Mammary epithelial cell (primary cell): ENCODE measurements at regions of chr5 and their contacts with region 1.

Region 1: DNA sequence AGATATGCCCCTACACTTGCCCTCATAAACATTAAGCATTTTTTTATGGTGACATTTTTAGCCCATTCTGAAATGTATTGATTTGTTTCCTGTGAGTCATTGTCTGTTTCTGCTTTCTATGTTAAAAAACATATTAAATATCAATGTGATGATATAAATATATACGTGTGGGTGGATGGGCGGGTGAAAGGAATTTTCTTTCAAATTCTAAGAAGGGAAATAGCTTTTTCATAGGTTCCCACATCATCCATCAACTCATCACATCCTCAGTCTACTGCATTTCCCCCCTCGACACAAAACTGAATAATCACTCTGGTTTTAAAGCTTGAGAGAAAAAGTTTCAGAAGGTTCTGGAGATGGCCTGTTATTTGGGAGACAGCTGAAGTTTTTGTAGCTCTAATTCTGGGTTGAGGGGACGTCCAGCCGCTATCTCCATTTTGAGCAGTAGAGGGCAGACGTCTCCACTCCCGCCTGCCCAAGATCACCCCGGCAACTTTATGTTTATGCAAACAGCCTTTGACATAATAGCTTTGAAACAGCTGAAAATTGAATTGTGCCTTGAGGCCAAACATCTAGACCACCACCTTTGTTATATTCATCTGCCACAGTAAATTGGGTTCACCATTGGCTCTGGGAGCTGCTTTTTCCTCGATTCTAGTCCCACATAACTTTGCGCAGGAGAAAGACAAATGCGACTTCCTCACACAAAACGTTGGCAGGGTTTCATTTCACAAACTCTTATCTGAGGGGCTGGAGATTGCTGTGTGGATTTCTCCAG is 216.2 kb upstream of the CLINT1 start:
- DNase-seq: peak; percentile 35
- H3K4me3 ChIP-seq: no peak overlapping the region
- H3K27ac ChIP-seq: no peak overlapping the region
- H3K4me1 ChIP-seq: no peaks in the 10 kb centered on the region
- H3K27me3 ChIP-seq: no peaks in the 10 kb centered on the region
- CTCF ChIP-seq: peak; percentile 68 to 83

Region 2: GRCh38 chr5:157820593-157821252 is 254.5 kb before region 1 on chr5:
- CTCF ChIA-PET with region 1: interaction called, 29 read pairs
- dilution Hi-C with region 1: no loop called
- in situ Hi-C with region 1: no loop called
- intact Hi-C with region 1: no loop called
- DNase-seq: peak; percentile 14
- H3K4me3 ChIP-seq: no peak overlapping the region
- H3K27ac ChIP-seq: no peak overlapping the region
- H3K4me1 ChIP-seq: no peaks in the 10 kb centered on the region
- H3K27me3 ChIP-seq: no peaks in the 10 kb centered on the region
- CTCF ChIP-seq: peak; percentile 47 to 53

Region 3: GRCh38 chr5:157845894-157846598 is 229.1 kb before region 1 on chr5:
- CTCF ChIA-PET with region 1: no interaction called
- dilution Hi-C with region 1: no loop called
- in situ Hi-C with region 1: no loop called
- intact Hi-C with region 1: no loop called
- DNase-seq: no peak
- H3K4me3 ChIP-seq: no peak overlapping the region
- H3K27ac ChIP-seq: no peak overlapping the region
- H3K4me1 ChIP-seq: no peaks in the 10 kb centered on the region
- H3K27me3 ChIP-seq: no peaks in the 10 kb centered on the region
- CTCF ChIP-seq: no peak

Region 4: GRCh38 chr5:157948738-157949410 is 126.3 kb before region 1 on chr5:
- CTCF ChIA-PET with region 1: no interaction called
- dilution Hi-C with region 1: no loop called
- in situ Hi-C with region 1: no loop called
- intact Hi-C with region 1: no loop called
- DNase-seq: peak; percentile 89
- H3K4me3 ChIP-seq: no peak overlapping the region
- H3K27ac ChIP-seq: no peak overlapping the region
- H3K4me1 ChIP-seq: no peaks in the 10 kb centered on the region
- H3K27me3 ChIP-seq: no peaks in the 10 kb centered on the region
- CTCF ChIP-seq: peak; percentile 82 to 93

Region 5: DNA sequence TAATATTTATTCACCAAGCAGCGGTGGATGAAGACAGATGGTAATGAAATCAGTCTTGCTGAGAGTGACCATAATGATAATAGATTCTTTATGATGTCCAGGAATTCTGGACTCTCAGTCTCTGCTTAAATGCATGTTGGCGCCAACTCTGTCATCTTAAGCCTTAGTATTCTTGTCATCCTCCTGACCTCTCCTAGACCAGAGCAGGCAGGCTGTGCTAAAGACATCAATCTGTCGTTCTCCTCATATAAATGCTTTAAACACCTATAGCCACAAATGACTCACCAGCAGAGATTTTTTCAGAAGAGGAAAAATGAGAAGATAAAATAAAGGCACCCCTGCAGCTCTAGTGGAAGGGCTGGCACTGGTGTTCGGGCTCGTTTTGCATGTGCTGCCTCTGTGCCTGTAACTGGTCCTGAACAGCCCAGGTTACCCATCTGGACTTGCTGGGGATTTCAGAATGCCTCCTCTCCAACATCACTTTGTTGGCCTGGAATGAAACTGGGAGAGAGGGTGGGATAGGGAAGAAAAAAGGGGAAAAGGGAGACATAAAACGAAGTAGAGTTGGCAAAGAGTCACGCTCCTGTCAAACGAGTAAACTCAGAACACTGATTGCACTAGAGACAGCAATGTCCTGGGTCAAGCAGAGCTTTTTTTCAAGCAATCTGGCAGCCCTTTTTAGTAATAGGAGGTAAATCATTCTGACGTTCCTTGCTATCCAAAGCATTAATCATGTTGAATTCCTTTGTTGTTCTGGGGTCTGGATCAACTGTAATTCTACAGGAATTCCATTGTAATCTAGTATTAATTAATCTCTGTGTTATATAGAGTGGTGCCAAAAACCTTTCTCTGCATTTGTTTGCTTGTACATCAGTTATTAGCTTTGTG is 20.7 kb before region 1 on chr5:
- CTCF ChIA-PET with region 1: interaction called, 10 read pairs
- dilution Hi-C with region 1: no loop called
- in situ Hi-C with region 1: no loop called
- intact Hi-C with region 1: no loop called
- DNase-seq: no peak
- H3K4me3 ChIP-seq: no peak overlapping the region
- H3K27ac ChIP-seq: no peak overlapping the region
- H3K4me1 ChIP-seq: peaks cover 4% of the 10 kb centered on the region
- H3K27me3 ChIP-seq: no peaks in the 10 kb centered on the region
- CTCF ChIP-seq: no peak

Region 6: DNA sequence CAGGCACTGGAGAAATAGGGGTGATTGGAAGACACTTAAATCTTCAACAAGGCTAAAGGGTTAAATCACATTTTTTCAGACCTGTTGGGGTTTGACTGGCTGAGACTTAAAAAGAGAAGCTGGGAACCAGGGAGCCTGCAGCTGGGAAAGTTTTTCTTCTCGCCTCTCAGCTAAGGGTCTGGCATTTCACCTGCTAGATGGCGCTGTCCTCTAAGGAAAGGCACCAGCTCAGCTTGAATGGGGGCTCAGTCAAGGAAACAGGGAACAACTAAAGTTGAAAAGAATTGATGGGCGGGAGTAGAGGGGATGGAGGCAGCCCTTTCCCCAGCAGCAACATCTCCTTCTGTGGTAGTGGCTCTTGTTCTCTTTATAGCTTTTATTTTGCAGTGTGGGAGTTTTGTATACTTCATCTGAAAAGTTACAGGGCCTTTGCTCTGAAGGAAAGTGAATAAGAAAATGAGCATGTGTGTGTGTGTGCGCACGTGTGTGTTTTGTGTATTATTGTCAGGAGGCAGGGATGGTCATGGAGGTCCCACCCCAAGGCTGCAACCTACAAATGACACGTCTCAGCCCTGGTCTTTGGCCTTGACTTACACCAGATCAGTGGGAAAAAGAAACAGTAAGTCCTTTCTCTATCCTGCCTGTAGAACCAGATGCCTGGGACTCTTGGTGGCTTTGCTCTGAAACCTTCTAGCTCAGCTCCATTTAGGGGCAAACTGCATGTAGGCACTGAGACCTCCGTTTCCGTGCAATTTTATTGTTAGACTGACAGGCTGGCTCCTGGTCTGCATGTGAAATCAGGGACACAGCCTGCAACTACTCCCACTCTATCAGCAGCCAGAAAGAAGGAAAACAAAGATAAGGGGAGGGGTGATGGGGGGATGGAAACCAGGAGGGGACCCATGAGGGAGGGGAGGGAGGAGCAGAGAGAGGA is 100.0 kb after region 1 on chr5:
- CTCF ChIA-PET with region 1: interaction called, 3 read pairs
- dilution Hi-C with region 1: no loop called
- in situ Hi-C with region 1: no loop called
- intact Hi-C with region 1: loop called (anchors 2 kb)
- DNase-seq: peak; percentile 23
- H3K4me3 ChIP-seq: no peak overlapping the region
- H3K27ac ChIP-seq: no peak overlapping the region
- H3K4me1 ChIP-seq: no peaks in the 10 kb centered on the region
- H3K27me3 ChIP-seq: no peaks in the 10 kb centered on the region
- CTCF ChIP-seq: peak; percentile 79 to 91

Region 7: GRCh38 chr5:158695595-158696330 is 620.6 kb after region 1 on chr5:
- CTCF ChIA-PET with region 1: no interaction called
- dilution Hi-C with region 1: no loop called
- in situ Hi-C with region 1: no loop called
- intact Hi-C with region 1: loop called (anchors 2 kb)
- DNase-seq: peak; percentile 17
- H3K4me3 ChIP-seq: no peak overlapping the region
- H3K27ac ChIP-seq: no peak overlapping the region
- H3K4me1 ChIP-seq: no peaks in the 10 kb centered on the region
- H3K27me3 ChIP-seq: peaks cover 2% of the 10 kb centered on the region
- CTCF ChIP-seq: peak; percentile 90 to 97

Region 8: DNA sequence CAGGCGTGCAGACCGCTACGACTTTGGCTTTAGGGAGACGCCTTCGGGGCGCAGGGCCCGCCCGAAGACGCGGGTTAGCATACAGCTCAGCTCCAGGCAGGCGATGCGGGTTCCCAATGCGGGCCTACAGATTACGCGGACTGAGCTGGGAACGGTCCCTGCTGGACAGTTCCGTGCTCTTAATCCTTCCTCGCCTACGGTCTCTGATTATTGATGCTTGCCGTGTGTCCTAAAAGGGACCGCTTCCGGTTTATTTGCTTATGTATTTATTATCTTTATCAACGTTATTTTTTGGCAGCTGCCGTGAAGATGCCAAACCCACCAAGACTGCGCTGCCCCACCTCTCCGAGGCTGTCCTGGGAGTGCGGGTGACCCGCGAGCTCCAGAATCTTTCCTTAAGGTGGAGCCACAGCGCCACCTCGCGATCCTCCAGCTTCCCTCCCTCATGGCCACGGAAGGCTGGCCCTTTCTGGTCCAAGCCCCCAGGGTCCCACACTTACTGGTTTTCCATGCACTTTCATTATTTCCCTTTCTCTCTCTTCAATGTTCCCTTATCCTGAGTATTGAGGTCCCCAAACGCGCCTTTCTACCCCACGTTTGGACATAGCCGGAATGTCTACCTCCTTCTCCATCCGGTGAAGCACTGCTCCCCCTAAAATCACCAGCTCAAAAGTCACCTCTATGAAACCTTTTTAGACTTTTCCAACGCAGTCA is 1031.5 kb after region 1 on chr5:
- CTCF ChIA-PET with region 1: interaction called, 11 read pairs
- dilution Hi-C with region 1: no loop called
- in situ Hi-C with region 1: no loop called
- intact Hi-C with region 1: loop called (anchors 1 kb)
- DNase-seq: peak; percentile 38
- H3K4me3 ChIP-seq: peak overlapping the region in 2 of 3 experiments; percentile 14 to 28
- H3K27ac ChIP-seq: no peak overlapping the region
- H3K4me1 ChIP-seq: peaks cover 4% of the 10 kb centered on the region
- H3K27me3 ChIP-seq: peaks cover 30% of the 10 kb centered on the region
- CTCF ChIP-seq: peak; percentile 88 to 90

Region 9: DNA sequence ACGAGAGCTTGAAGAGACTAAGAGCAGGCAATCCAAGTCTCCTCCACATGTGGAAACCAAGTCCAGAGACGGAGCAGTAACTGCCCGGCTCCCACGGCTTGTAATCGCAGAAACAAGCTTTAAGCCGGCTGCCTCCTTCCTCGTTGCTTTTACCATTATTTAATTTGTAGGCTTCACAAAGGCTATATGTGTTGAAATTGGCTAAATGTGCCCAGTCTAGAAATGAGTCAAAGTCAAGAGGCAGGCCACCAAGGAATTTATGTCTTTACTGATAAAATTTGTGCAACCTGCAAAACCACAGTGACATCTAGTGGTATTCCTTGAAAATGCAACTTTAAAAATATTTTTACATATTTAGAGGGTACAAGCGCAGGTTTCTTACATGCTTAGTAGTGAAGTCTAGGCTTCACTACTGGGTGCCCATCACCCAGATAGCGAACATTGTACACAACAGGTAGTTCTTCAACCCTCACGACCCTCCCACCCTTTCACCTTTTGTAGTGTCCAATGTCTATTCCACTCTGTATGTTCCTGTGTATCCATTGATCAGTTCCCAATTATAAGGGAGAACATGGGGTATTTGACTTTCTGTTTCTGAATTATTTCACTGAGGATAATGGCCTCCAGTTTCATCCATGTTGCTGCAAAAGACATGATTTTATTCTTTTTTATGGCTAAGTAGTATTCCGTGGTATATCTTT is 1058.0 kb after region 1 on chr5:
- CTCF ChIA-PET with region 1: no interaction called
- dilution Hi-C with region 1: no loop called
- in situ Hi-C with region 1: no loop called
- intact Hi-C with region 1: loop called (anchors 10 kb)
- DNase-seq: peak; percentile 38
- H3K4me3 ChIP-seq: no peak overlapping the region
- H3K27ac ChIP-seq: no peak overlapping the region
- H3K4me1 ChIP-seq: no peaks in the 10 kb centered on the region
- H3K27me3 ChIP-seq: no peaks in the 10 kb centered on the region
- CTCF ChIP-seq: peak; percentile 62 to 69